RWPE1 (cell line): ENCODE measurements at regions of chr7 and their contacts with region 1.

Region 1: GRCh38 chr7:30074422-30075030 is 46.3 kb downstream of the PLEKHA8 start:
- DNase-seq: peak; percentile 48
- H3K27ac ChIP-seq: no peak overlapping the region
- CTCF ChIP-seq: peak; percentile 79

Region 2: DNA sequence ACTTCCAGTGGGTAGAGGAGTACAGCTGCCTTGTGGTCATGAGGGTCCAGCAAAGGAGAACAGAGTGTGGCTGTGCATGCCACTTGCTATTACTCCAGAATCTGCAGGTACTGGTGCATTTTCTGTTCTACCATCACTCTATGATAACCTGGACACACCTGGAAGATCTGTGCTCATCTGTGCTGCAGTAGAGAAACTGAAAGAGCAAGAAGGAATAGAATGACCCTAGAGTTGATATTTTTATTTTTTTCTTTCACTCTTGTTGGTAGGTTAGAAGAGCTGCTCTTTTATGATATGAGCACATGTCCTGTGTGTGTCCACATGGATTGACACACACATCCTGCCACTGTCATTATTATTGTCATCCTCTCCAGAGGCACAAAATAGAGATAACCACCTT is 12.0 kb after region 1 on chr7:
- CTCF ChIA-PET with region 1: interaction called, 10 read pairs
- POLR2A ChIA-PET with region 1: no interaction called
- DNase-seq: no peak
- H3K27ac ChIP-seq: no peak overlapping the region
- CTCF ChIP-seq: no peak